ENCODE measurements at regions of chr7 and their contacts with region 1.

Region 1: DNA sequence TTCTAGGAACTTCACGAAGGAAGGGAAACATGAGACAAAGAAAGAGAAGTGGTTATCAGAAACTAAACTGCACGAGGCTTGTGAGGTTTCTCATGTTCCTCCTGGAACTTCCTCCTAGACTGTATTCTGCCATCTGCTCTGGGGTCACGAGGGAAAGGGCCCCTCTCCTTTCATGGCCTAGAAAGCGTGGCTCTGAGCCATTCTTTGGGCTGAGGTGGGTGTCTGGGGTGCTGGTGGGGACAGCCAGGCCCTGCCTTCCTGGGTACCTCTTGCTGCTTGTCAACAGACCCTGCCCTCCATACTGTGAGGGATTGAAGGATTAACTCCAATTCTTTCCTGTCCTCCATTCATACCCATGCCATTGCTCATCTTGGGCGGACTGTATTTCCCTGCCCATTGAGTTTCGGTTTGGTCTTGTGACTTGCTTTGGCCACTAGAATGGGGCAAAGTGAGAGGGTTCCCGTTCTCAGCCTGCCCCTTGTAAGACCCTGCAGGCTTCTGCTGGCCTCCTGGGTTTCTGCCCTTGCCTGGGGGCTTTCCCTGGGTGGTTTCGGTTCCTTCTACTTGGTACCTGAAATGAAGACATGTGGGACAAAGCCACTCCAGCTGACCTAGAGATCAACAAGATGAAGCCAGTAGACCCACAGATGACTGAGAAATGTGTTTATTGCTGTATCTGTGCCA is 14.9 kb upstream of the GIMAP8 start:
- DNase-seq: peak; percentile 94
- ATAC-seq: peak; percentile 92
- H3K4me3 ChIP-seq: peak overlapping the region in 1 of 5 experiments; percentile 26
- H3K4me3 Mint-ChIP-seq: peak overlapping the region; percentile 73
- H3K27ac ChIP-seq: peak overlapping the region; percentile 98 to 99
- H3K27ac Mint-ChIP-seq: peak overlapping the region; percentile 95
- H3K4me1 ChIP-seq: peaks cover 40 to 43% of the 10 kb centered on the region in 2 donors
- H3K4me1 Mint-ChIP-seq: peaks cover 59% of the 10 kb centered on the region
- H3K27me3 ChIP-seq: no peaks in the 10 kb centered on the region
- H3K27me3 Mint-ChIP-seq: no peaks in the 10 kb centered on the region
- CTCF ChIP-seq: no peak

Region 2: GRCh38 chr7:150368096-150368883 is 67.2 kb before region 1 on chr7 and contains the start of gene REPIN1:
- CTCF ChIA-PET with region 1: interaction called, 5 read pairs
- POLR2A ChIA-PET with region 1: no interaction called
- intact Hi-C with region 1: loop called (anchors 1 kb)
- DNase-seq: peak; percentile 89
- ATAC-seq: peak; percentile 49
- H3K4me3 ChIP-seq: peak within 1 kb of the TSS; percentile 62 to 98 (median 82)
- H3K4me3 Mint-ChIP-seq: peak within 1 kb of the TSS; percentile 92
- H3K27ac ChIP-seq: peak within 1 kb of the TSS; percentile 98 to 99
- H3K27ac Mint-ChIP-seq: peak within 1 kb of the TSS; percentile 98
- H3K4me1 ChIP-seq: peaks cover 57 to 72% of the 10 kb centered on the region in 2 donors
- H3K4me1 Mint-ChIP-seq: peaks cover 69% of the 10 kb centered on the region
- H3K27me3 ChIP-seq: no peaks in the 10 kb centered on the region
- H3K27me3 Mint-ChIP-seq: no peaks in the 10 kb centered on the region
- CTCF ChIP-seq: no peak
- total RNA-seq, gene REPIN1: 190 and 193 TPM in 2 replicates

Region 3: DNA sequence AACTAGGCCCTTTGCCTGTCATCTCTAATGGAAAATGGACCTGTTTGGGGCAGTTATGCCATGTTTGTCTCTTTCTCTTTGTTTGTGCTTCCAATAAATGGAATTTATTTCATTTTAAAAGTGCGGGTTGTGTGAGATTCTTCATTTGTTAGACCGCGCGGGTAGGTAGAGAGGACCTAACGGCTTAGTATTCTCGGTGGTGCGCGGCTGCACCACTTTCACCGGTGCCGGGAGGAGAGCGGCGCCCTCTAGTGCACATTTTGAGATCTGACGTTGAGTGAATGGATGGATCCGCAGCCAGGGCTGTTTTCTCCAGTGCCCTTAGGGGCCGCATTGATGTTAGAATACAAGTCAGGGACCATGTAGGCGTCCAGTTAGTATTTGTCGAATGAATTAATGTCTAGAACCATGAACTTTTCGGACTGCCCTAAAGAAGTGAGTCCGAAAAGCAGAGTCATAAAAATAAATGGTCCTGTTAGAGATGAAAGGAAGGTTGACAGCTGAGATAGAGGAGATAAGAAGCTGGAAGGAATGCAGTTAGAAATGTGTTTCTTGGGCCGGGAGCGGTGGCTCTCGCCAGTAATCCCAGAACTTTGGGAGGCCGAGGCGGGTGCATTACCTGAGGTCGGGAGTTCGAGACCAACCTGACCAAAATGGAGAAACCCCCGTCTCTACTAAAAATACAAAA is 14.4 kb before region 1 on chr7:
- CTCF ChIA-PET with region 1: interaction called, 8 read pairs
- POLR2A ChIA-PET with region 1: interaction called, 7 read pairs
- intact Hi-C with region 1: loop called (anchors 2 kb)
- DNase-seq: peak; percentile 90
- ATAC-seq: peak; percentile 99
- H3K4me3 ChIP-seq: peak overlapping the region in 1 of 5 experiments; percentile 4
- H3K4me3 Mint-ChIP-seq: peak overlapping the region; percentile 7
- H3K27ac ChIP-seq: no peak overlapping the region
- H3K27ac Mint-ChIP-seq: peak overlapping the region; percentile 51
- H3K4me1 ChIP-seq: peaks cover 0 to 5% of the 10 kb centered on the region in 2 donors
- H3K4me1 Mint-ChIP-seq: peaks cover 5% of the 10 kb centered on the region
- H3K27me3 ChIP-seq: no peaks in the 10 kb centered on the region
- H3K27me3 Mint-ChIP-seq: peaks cover 4% of the 10 kb centered on the region
- CTCF ChIP-seq: peak; percentile 97

Region 4: GRCh38 chr7:151085691-151086620 is 650.4 kb after region 1 on chr7 and contains the start of gene AGAP3:
- CTCF ChIA-PET with region 1: no interaction called
- POLR2A ChIA-PET with region 1: no interaction called
- intact Hi-C with region 1: loop called (anchors 5 kb)
- DNase-seq: peak; percentile 59
- ATAC-seq: peak; percentile 40
- H3K4me3 ChIP-seq: peak within 1 kb of the TSS in 4 of 5 experiments; percentile 47 to 75 (median 68)
- H3K4me3 Mint-ChIP-seq: peak within 1 kb of the TSS; percentile 91
- H3K27ac ChIP-seq: peak within 1 kb of the TSS in 1 of 2 donors; percentile 33
- H3K27ac Mint-ChIP-seq: peak within 1 kb of the TSS; percentile 77
- H3K4me1 ChIP-seq: peaks cover 58 to 59% of the 10 kb centered on the region in 2 donors
- H3K4me1 Mint-ChIP-seq: peaks cover 48% of the 10 kb centered on the region
- H3K27me3 ChIP-seq: peaks cover 0 to 54% (median 17%) of the 10 kb centered on the region in 4 experiments
- H3K27me3 Mint-ChIP-seq: peaks cover 23% of the 10 kb centered on the region
- CTCF ChIP-seq: no peak
- total RNA-seq, gene AGAP3: 20.2 and 21.1 TPM in 2 replicates